ENCODE measurements at regions of chr5 and their contacts with region 1.

Region 1: DNA sequence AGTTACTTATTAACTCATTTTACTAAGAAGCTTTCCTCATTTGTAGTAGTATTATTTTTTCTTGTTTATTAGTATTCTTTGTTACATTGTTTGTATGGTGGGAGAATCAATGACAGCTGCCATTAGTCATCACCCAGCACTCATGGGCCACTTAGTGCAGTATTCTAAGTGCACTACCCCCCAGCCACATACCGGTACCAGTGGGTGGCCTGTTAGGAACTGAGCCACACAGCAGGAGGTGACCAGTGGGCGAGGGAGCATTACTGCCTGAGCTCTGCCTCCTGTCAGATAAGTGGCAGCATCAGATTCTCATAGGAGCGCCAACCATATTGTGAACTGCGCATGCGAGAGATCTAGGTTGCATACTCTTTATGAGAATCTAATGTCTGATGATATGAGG is 24.2 kb upstream of the CAMLG start:
- DNase-seq: no peak
- ATAC-seq: no peak
- H3K4me3 ChIP-seq: no peak overlapping the region
- H3K27ac ChIP-seq: no peak overlapping the region
- H3K4me1 ChIP-seq: no peaks in the 10 kb centered on the region
- H3K27me3 ChIP-seq: no peaks in the 10 kb centered on the region
- CTCF ChIP-seq: no peak

Region 2: GRCh38 chr5:134275822-134276221 is 438.3 kb before region 1 on chr5:
- CTCF ChIA-PET with region 1: no interaction called
- POLR2A ChIA-PET with region 1: interaction called, 13 read pairs
- in situ Hi-C with region 1: no loop called
- intact Hi-C with region 1: no loop called
- DNase-seq: no peak
- ATAC-seq: no peak
- H3K4me3 ChIP-seq: no peak overlapping the region
- H3K27ac ChIP-seq: no peak overlapping the region
- H3K4me1 ChIP-seq: peaks cover 5% of the 10 kb centered on the region; the same call in 1 of the 2 replicates
- H3K27me3 ChIP-seq: no peaks in the 10 kb centered on the region
- CTCF ChIP-seq: no peak